ENCODE measurements at regions of chr11 and their contacts with region 1.

Region 1: DNA sequence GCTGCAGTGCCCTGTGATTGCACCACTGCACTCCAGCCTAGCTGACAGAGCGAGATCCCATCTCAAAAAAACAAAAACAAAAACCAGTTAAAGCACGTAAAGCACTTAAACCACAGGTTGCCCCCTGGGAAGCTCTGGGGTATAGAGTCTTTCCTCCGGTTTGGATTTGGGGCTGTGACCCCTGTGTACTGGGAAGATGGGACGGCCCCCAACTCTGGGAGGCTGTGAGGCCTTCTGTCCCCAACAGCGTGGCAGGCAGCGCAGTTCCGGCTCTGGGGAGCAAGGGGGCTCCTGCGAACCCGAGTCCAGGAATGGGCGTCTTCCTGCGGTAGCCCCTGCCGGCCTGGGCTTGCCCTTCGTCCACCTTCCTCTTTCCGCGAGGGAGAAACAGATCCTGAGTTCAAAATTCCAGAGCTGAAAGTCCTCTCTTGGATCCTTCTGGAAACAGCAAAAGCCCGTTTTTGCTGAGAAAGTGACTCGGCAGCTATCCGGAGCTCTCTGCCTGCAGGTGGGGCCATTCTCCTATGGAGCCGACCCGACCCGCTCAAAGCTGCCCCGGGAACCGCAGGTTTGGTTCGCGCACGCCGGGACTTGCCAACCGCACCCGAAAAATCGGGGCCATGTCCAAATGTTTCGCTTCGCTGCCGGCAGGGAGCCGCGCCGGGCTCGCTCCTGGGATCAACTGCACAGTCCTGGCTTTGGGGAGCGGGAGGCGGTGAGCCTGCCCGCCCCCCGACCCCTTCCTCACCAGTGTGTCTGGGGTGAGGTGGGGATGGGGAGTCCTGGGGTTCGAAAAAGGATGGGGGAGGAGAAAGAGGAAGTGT is 36.3 kb upstream of the POLA2 start:
- DNase-seq: peak; percentile 69 to 80
- H3K4me3 ChIP-seq: peak overlapping the region; percentile 45
- H3K4me3 Mint-ChIP-seq: peak overlapping the region; percentile 87
- H3K27ac Mint-ChIP-seq: peak overlapping the region; percentile 83
- H3K4me1 ChIP-seq: peaks cover 17% of the 10 kb centered on the region
- H3K4me1 Mint-ChIP-seq: peaks cover 9% of the 10 kb centered on the region
- H3K27me3 ChIP-seq: no peaks in the 10 kb centered on the region
- H3K27me3 Mint-ChIP-seq: no peaks in the 10 kb centered on the region
- CTCF ChIP-seq: peak; percentile 67 to 68

Region 2: DNA sequence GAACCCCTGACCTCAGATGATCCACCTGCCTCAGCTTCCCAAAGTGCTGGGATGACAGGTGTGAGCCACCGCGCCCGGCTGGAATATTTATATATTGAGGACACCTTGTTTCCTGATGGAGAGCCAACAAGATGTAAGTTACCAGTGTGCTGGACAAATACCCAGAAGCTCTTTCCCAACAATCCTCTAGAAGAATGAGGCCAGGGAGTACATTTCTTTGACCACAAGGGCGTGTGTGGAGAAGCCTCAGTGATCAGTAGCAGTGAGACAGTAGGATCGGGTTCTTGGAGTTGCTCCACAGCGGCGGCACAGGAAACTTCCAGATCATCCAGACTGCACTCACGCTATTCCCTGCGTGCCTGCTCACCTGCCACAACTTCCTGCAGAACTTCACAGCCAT is 26.0 kb after region 1 on chr11:
- CTCF ChIA-PET with region 1: interaction called, 27 read pairs
- POLR2A ChIA-PET with region 1: no interaction called
- intact Hi-C with region 1: loop called (anchors 1 kb)
- DNase-seq: no peak
- H3K4me3 ChIP-seq: no peak overlapping the region
- H3K4me3 Mint-ChIP-seq: no peak overlapping the region
- H3K27ac Mint-ChIP-seq: no peak overlapping the region
- H3K4me1 ChIP-seq: peaks cover 12% of the 10 kb centered on the region
- H3K4me1 Mint-ChIP-seq: peaks cover 3% of the 10 kb centered on the region
- H3K27me3 ChIP-seq: no peaks in the 10 kb centered on the region
- H3K27me3 Mint-ChIP-seq: no peaks in the 10 kb centered on the region
- CTCF ChIP-seq: no peak

Region 3: DNA sequence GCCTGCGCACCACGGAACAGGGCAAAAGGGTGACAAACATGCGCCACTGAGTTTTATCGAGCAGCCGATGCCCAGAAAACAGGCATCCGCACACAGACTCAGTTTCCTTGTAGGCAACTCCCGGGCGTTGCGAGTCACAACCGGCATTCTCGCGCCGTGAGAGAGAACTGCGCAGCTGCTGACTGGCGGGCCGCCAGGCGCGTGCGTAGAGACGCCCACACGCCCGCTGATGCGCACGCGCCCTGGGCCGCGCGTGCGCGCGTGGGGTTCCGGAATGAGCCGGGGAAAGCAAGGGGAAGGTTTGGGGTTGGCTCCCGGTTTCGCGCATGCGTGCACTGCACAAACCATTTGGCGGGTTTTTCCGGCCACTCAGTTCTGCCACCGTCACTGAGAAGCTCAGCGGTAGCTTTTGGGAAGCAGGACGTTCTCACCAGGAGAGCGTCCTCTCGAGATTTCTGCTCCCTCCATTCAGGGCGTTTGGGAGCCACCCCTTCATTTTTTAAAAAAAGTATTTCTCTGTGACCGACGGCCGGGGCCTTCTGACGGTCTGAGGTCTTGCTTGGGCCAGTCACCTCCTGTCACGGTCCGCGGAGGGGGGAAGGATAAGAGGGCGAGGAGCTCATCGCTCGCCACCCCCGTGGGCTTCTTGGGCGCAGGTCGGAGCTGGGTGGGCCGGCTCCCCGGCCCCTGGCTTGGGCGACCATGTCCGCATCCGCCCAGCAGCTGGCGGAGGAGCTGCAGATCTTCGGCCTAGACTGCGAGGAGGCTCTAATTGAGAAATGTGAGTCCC is 36.3 kb after region 1 on chr11 and contains the start of gene POLA2:
- CTCF ChIA-PET with region 1: interaction called, 18 read pairs
- POLR2A ChIA-PET with region 1: interaction called, 3 read pairs
- intact Hi-C with region 1: no loop called
- DNase-seq: peak; percentile 96
- H3K4me3 ChIP-seq: peak within 1 kb of the TSS; percentile 71
- H3K4me3 Mint-ChIP-seq: peak within 1 kb of the TSS; percentile 81
- H3K27ac Mint-ChIP-seq: peak within 1 kb of the TSS; percentile 70
- H3K4me1 ChIP-seq: no peaks in the 10 kb centered on the region
- H3K4me1 Mint-ChIP-seq: peaks cover 22% of the 10 kb centered on the region
- H3K27me3 ChIP-seq: no peaks in the 10 kb centered on the region
- H3K27me3 Mint-ChIP-seq: no peaks in the 10 kb centered on the region
- CTCF ChIP-seq: no peak
- total RNA-seq, gene POLA2: 23.2 and 25.3 TPM in 2 replicates